Activated CD8-positive, alpha-beta T cell treated with anti-CD3 and anti-CD28 coated beads for 36 hours (primary cell): ENCODE measurements at regions of chr22 and their contacts with region 1.

Region 1: DNA sequence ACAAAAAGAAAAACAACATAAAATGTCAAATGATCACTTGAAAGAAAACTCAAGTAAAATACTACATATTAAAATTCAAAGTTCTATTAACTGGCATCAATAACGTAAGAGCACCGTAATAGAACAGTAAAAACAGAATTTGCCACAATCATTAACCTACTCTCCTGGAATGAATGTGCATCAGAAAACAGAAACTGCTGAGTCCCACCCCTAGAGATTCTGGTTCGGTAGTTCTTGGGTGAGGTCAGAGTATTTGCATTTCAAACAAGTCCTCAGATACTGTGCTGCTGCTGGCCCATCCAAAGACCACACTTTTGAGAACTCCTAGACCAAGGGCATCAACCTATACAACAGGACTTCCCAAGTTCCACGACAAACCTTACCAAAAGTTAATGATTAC is 23.5 kb downstream of the PITPNB start:
- DNase-seq: no peak
- ATAC-seq: no peak
- H3K4me3 Mint-ChIP-seq: no peak overlapping the region
- H3K27ac Mint-ChIP-seq: no peak overlapping the region
- H3K4me1 Mint-ChIP-seq: peaks cover 3% of the 10 kb centered on the region
- H3K27me3 Mint-ChIP-seq: no peaks in the 10 kb centered on the region
- CTCF ChIP-seq: no peak

Region 2: DNA sequence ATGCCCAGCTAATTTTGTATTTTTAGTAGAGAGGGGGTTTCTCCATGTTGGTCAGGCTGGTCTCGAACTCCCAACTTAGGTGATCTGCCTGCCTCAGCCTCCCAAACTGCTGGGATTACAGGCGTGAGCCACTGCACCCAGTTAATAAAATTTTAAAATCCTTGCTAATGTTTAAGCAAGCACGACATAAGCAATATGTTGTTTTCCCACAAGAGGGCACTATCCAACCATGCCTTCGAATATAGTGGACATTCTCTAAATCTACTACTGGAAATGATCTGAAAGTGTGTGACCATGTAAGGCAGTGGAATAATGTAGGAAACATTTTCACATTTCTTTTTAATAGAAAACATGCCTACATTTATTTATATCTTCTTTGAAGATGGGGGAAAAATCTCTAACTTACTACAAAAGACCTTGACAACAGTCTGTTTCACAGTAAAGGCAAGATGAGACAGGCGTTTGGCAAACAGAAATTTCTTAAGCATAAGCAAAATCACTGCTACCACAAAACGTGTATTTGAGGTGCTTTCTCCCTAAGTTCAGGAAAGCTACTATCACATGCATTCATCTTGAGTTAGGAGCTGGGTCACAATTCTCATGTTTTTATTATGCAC is 14.7 kb before region 1 on chr22:
- CTCF ChIA-PET with region 1: interaction called, 15 read pairs
- POLR2A ChIA-PET with region 1: no interaction called
- intact Hi-C with region 1: no loop called
- DNase-seq: peak; percentile 27
- ATAC-seq: no peak
- H3K4me3 Mint-ChIP-seq: no peak overlapping the region
- H3K27ac Mint-ChIP-seq: no peak overlapping the region
- H3K4me1 Mint-ChIP-seq: peaks cover 39% of the 10 kb centered on the region
- H3K27me3 Mint-ChIP-seq: no peaks in the 10 kb centered on the region
- CTCF ChIP-seq: peak; percentile 67

Region 3: DNA sequence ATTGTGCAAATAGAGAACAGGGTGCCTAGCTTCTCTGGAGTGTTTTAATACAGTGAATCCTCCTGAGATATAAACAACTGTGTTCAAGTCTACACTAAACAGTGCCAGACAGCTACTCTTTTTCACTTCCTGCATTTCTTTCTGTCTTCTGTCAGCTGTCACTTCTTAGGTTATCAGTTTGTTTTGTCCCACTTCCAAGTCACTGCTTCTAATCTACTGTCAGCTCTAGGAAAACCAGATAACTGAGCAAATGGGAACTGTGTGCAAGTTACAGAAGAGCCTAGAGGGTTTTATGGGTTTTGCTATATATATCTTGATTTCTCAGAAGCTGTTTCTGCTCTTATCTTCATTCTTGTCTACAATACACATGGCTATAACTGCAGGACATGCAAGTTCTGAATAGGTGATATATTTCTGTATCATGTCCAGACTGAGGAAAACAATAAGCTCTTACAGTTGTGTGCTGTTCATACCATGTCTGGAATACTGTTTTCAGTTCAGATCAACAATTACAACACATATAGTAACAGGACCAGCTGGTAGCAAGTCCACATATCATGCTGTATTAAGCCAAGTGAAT is 17.7 kb after region 1 on chr22:
- CTCF ChIA-PET with region 1: interaction called, 10 read pairs
- POLR2A ChIA-PET with region 1: no interaction called
- intact Hi-C with region 1: no loop called
- DNase-seq: no peak
- ATAC-seq: no peak
- H3K4me3 Mint-ChIP-seq: no peak overlapping the region
- H3K27ac Mint-ChIP-seq: no peak overlapping the region
- H3K4me1 Mint-ChIP-seq: peaks cover 61% of the 10 kb centered on the region
- H3K27me3 Mint-ChIP-seq: no peaks in the 10 kb centered on the region
- CTCF ChIP-seq: no peak

Region 4: GRCh38 chr22:28029201-28029948 is 133.8 kb after region 1 on chr22:
- CTCF ChIA-PET with region 1: no interaction called
- POLR2A ChIA-PET with region 1: no interaction called
- intact Hi-C with region 1: no loop called
- DNase-seq: no peak
- ATAC-seq: no peak
- H3K4me3 Mint-ChIP-seq: no peak overlapping the region
- H3K27ac Mint-ChIP-seq: no peak overlapping the region
- H3K4me1 Mint-ChIP-seq: no peaks in the 10 kb centered on the region
- H3K27me3 Mint-ChIP-seq: peaks cover 2% of the 10 kb centered on the region
- CTCF ChIP-seq: no peak